SK-N-SH (cell line): ENCODE measurements at regions of chr4 and their contacts with region 1.

Region 1: DNA sequence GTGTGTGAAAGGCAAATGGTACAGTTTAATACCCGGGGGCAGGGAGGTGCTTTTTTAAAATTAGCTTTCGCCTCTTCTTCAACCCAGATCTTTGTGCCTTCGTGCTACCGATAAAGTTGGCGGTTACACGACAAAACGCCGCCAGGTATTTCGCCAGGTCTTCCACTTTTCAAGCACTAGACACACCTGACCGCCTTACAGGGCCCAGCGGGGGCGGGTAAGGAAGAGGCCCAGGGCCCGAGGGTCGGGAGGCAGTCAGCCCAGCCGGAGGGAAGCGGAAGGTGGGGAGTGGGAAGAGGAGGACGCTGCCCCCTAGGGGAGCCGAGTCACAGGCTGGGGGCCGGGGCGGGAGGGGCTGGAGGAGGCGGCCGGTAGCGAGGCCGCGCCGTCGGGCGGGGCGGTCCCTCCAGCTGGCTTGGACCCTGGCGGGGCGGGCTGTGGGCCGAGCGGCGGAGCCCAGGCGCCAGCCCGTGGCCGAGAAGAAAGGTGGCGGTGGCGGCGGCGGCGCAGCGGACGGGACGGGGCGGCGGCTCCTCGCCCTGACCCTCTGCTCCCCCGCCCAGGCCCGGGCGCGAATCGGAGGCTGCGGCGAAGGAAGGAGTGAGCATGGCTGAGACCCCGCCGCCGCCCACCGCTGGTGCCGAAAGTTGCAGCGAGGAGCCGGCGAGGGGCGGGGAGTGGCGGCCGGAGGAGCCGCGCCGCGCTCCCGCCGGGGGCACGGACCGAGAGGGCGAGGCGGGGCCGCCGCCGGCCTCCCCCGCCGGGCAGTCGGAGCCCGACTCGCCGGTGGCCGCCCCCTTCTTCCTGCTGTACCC is 16.2 kb downstream of the UTP3 start:
- DNase-seq: peak; percentile 94
- H3K4me3 ChIP-seq: peak overlapping the region; percentile 79 to 80
- H3K27ac ChIP-seq: peak overlapping the region; percentile 87 to 93
- H3K4me1 ChIP-seq: peaks cover 4 to 11% of the 10 kb centered on the region in 2 experiments; a peak in 3 of 4 replicates
- H3K27me3 ChIP-seq: no peaks in the 10 kb centered on the region
- CTCF ChIP-seq: peak; percentile 53
- EP300 ChIP-seq: no peak
- RAD21 ChIP-seq: peak; percentile 17; the same call in 1 of the 2 replicates

Region 2: GRCh38 chr4:70589785-70590184 is 114.8 kb before region 1 on chr4:
- CTCF ChIA-PET with region 1: no interaction called
- POLR2A ChIA-PET with region 1: no interaction called
- DNase-seq: no peak
- H3K4me3 ChIP-seq: no peak overlapping the region
- H3K27ac ChIP-seq: no peak overlapping the region
- H3K4me1 ChIP-seq: no peaks in the 10 kb centered on the region
- H3K27me3 ChIP-seq: peaks cover 8% of the 10 kb centered on the region
- CTCF ChIP-seq: no peak
- EP300 ChIP-seq: no peak
- RAD21 ChIP-seq: no peak

Region 3: DNA sequence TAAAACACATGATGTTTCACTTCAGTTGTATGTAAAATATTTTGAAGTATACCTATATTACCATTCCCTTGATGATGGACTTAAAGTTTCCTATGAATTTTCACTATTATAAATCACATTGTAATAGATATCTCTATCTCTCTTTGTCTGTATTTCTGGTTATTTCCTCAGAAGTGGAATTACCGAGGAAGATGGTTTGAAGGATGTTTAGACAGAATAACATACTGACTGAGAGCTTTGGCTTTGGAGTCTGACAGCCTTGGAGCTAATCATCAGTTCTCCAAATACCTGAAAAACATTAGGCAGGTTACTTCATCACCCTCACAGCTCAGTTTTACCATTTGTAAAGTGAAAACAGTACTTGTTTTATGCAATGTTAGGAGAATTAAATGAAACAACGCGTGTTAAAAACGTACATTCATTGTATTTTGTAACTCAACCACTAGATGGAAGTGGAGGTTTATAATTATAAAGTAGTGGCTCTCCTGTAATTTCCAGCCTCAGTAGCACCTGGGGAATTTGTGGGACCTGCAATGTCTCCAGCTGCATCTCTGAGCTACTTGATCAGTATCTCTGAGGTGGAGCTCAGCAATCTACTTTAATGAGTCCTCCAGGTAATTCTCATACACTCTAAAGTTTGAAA is 52.6 kb before region 1 on chr4:
- CTCF ChIA-PET with region 1: interaction called, 12 read pairs
- POLR2A ChIA-PET with region 1: no interaction called
- DNase-seq: peak; percentile 24
- H3K4me3 ChIP-seq: peak overlapping the region; percentile 25 to 40; a peak in 3 of 4 replicates
- H3K27ac ChIP-seq: no peak overlapping the region
- H3K4me1 ChIP-seq: no peaks in the 10 kb centered on the region
- H3K27me3 ChIP-seq: no peaks in the 10 kb centered on the region; the same call in 1 of the 2 replicates
- CTCF ChIP-seq: peak; percentile 76
- EP300 ChIP-seq: no peak
- RAD21 ChIP-seq: peak; percentile 74

Region 4: GRCh38 chr4:70687821-70688794 is 16.4 kb before region 1 on chr4 and contains the start of gene UTP3:
- CTCF ChIA-PET with region 1: interaction called, 48 read pairs
- POLR2A ChIA-PET with region 1: interaction called, 11 read pairs
- DNase-seq: peak; percentile 87
- H3K4me3 ChIP-seq: peak within 1 kb of the TSS; percentile 90 to 98
- H3K27ac ChIP-seq: peak within 1 kb of the TSS; percentile 93 to 94
- H3K4me1 ChIP-seq: peaks cover 6 to 13% of the 10 kb centered on the region in 2 experiments; a peak in 3 of 4 replicates
- H3K27me3 ChIP-seq: no peaks in the 10 kb centered on the region; the same call in 1 of the 2 replicates
- CTCF ChIP-seq: peak; percentile 97
- EP300 ChIP-seq: peak in 1 of 2 experiments; percentile 75; a peak in 2 of 4 replicates
- RAD21 ChIP-seq: peak; percentile 63
- polyA plus RNA-seq, gene UTP3: 36.9 and 39.0 TPM in 2 replicates

Region 5: DNA sequence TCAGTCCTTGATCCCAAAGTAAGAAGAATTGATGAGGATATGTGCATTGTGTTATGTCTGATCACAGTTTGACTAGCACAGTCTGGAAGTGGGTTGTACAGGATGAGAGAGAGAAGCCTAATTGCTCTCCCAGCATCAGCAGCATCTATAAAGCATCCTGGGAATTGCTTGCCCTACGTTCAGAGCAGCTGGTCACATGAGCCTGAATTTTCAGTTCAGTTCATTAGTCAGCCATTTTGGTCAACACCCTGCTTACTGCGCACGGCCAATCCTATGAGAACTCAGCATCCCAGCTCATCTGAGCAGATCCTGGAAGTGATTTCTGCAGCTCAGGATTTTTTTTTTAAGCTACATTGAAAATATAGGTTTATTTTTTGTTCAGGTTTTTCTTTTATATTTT is 17.2 kb after region 1 on chr4 and contains the start of gene RUFY3:
- CTCF ChIA-PET with region 1: interaction called, 7 read pairs
- POLR2A ChIA-PET with region 1: interaction called, 20 read pairs
- DNase-seq: peak; percentile 80
- H3K4me3 ChIP-seq: peak within 1 kb of the TSS; percentile 59 to 80
- H3K27ac ChIP-seq: peak within 1 kb of the TSS; percentile 93
- H3K4me1 ChIP-seq: peaks cover 0 to 14% of the 10 kb centered on the region in 2 experiments; a peak in 2 of 4 replicates
- H3K27me3 ChIP-seq: no peaks in the 10 kb centered on the region
- CTCF ChIP-seq: no peak
- EP300 ChIP-seq: peak in 1 of 2 experiments; percentile 57; a peak in 1 of 4 replicates
- RAD21 ChIP-seq: no peak
- polyA plus RNA-seq, gene RUFY3: 22.8 and 30.7 TPM in 2 replicates

Region 6: DNA sequence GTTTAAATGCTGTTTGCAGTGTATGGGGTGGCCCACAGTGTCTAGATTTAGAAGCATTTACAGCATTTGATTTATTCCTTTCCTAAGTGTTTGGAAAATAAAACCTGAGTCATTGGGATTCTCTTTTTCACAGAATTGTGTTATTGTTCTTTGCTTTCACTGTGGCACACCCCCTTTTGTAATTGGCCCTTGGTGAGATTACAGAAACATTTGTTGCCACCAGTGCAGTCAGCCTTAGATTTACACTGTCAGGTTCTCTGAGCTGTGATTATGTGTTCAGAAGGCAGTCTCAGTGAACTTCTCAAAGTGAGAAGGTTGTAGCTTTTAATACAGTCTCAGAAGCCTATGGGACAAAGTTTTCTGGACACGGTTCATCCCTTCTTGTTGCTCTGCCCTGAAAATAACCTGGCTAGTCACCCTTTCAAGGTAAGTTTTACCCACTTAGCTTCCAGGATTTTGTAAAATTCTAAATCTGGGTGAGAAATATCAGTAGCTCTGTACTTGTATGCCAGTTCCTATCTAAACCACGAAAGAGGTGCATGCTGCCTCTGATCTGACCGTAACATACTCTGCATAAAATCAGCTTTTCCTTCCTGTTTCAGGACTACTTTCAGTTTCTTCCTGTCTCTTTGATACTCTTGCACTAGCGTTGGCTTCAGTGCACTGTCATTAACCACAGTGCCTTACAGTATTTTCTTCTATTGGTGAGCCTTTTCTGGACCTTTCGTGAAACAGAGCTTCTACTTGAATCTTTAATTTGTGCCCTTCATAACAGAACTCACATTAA is 29.8 kb after region 1 on chr4:
- CTCF ChIA-PET with region 1: interaction called, 10 read pairs
- POLR2A ChIA-PET with region 1: no interaction called
- DNase-seq: no peak
- H3K4me3 ChIP-seq: peak overlapping the region; percentile 2 to 21; a peak in 2 of 4 replicates
- H3K27ac ChIP-seq: peak overlapping the region; percentile 16 to 58
- H3K4me1 ChIP-seq: no peaks in the 10 kb centered on the region; a peak in 1 of 4 replicates
- H3K27me3 ChIP-seq: no peaks in the 10 kb centered on the region
- CTCF ChIP-seq: no peak
- EP300 ChIP-seq: no peak
- RAD21 ChIP-seq: no peak

Region 7: DNA sequence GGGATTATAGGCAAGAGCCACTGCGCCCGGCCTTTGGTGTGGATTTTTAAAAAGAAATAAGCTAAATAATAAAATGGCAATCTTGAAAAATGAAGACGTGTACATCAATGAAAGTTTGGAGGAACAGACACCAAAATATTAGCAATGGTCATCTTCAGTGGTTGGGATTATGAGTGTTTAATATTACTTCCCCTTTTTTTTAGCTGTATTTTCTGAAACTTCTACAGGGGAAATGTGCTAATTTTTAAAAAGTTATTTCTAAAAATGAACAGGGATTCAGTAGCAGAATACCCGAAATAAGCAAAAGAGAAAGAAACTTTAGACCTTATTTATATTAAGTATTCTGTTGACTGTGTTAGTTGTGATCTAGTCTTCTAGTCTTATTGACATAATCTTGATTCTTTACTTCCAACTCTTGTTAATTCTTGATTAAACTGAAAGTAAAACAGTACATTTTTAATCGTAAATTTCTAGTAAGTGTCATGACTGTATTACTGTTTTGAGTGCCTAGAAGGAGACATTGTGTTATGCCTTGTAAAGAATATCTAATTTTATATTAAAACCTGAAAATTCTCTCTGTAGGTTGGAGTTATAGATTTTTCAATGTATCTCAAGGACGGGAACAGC is 68.5 kb after region 1 on chr4:
- CTCF ChIA-PET with region 1: no interaction called
- POLR2A ChIA-PET with region 1: no interaction called
- DNase-seq: no peak
- H3K4me3 ChIP-seq: no peak overlapping the region
- H3K27ac ChIP-seq: no peak overlapping the region
- H3K4me1 ChIP-seq: 0 out of 4 replicates have a peak, but pooled peaks cover 0 to 2% of the 10 kb centered on the region in 2 experiments
- H3K27me3 ChIP-seq: no peaks in the 10 kb centered on the region
- CTCF ChIP-seq: no peak
- EP300 ChIP-seq: no peak
- RAD21 ChIP-seq: no peak

Region 8: DNA sequence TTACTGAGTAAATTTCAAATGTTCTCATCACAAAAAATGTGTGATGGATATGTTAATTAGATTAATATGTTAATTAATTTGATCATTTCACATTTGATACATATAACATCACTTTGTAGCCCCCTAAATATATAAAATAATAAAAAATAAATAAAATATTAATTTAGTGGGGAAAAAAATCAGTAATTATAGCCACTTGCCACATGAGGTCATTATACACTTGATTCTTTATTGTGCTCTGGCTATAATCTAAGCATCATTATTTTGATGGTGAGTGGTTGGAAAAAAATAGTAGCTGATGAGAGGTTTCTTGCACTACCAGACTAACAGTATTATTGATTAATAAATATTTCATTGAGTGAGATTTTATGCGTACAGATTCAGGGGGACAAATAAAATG is 346.3 kb after region 1 on chr4:
- CTCF ChIA-PET with region 1: no interaction called
- POLR2A ChIA-PET with region 1: no interaction called
- DNase-seq: no peak
- H3K4me3 ChIP-seq: no peak overlapping the region
- H3K27ac ChIP-seq: no peak overlapping the region
- H3K4me1 ChIP-seq: no peaks in the 10 kb centered on the region
- H3K27me3 ChIP-seq: no peaks in the 10 kb centered on the region
- CTCF ChIP-seq: no peak
- EP300 ChIP-seq: no peak
- RAD21 ChIP-seq: no peak